HEK293T (cell line): ENCODE measurements at regions of chr4 and their contacts with region 1.

Region 1: GRCh38 chr4:152640058-152640833 is 39.6 kb downstream of the TMEM154 start:
- DNase-seq: no peak

Region 2: GRCh38 chr4:152408514-152409327 is 231.5 kb before region 1 on chr4:
- CTCF ChIA-PET with region 1: interaction called, 14 read pairs
- POLR2A ChIA-PET with region 1: no interaction called
- DNase-seq: peak; percentile 42

Region 3: GRCh38 chr4:152719801-152720556 is 79.7 kb after region 1 on chr4:
- CTCF ChIA-PET with region 1: no interaction called
- POLR2A ChIA-PET with region 1: no interaction called
- DNase-seq: no peak